Activated CD4-positive, alpha-beta T cell treated with anti-CD3 and anti-CD28 coated beads for 36 hours (primary cell): ENCODE measurements at regions of chr11 and their contacts with region 1.

Region 1: DNA sequence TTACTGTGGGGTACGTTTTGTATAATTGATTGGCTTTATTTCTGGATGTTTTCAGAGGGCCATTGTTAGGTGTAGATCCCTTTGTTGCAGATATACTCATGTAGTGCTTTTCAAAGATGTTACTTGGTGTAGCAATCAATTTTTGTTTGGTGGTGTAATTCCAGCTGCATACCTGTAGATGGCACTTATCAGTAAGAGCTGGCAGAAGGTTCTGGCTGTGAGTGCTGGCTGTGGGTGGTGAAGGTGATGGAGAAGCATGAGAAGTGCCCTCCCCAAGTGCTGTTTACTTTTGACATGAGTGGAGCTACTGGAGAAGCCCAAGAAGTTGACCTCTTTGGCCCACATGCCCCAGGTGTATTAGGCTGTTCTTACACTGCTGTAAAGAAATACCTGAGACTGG is 1074.9 kb downstream of the FAM181B start:
- DNase-seq: peak; percentile 33
- ATAC-seq: peak; percentile 51
- H3K4me3 Mint-ChIP-seq: no peak overlapping the region
- H3K27ac Mint-ChIP-seq: no peak overlapping the region
- H3K4me1 Mint-ChIP-seq: no peaks in the 10 kb centered on the region
- H3K27me3 Mint-ChIP-seq: peaks cover 20% of the 10 kb centered on the region

Region 2: GRCh38 chr11:81634483-81634882 is 24.2 kb before region 1 on chr11:
- CTCF ChIA-PET with region 1: no interaction called
- POLR2A ChIA-PET with region 1: no interaction called
- intact Hi-C with region 1: no loop called
- DNase-seq: no peak
- ATAC-seq: no peak
- H3K4me3 Mint-ChIP-seq: no peak overlapping the region
- H3K27ac Mint-ChIP-seq: no peak overlapping the region
- H3K4me1 Mint-ChIP-seq: no peaks in the 10 kb centered on the region
- H3K27me3 Mint-ChIP-seq: peaks cover 4% of the 10 kb centered on the region

Region 3: GRCh38 chr11:82038153-82038552 is 379.4 kb after region 1 on chr11:
- CTCF ChIA-PET with region 1: no interaction called
- POLR2A ChIA-PET with region 1: no interaction called
- intact Hi-C with region 1: loop called in 1 of 2 experiments (anchors 10 kb)
- DNase-seq: no peak
- ATAC-seq: no peak
- H3K4me3 Mint-ChIP-seq: no peak overlapping the region
- H3K27ac Mint-ChIP-seq: no peak overlapping the region
- H3K4me1 Mint-ChIP-seq: no peaks in the 10 kb centered on the region
- H3K27me3 Mint-ChIP-seq: no peaks in the 10 kb centered on the region